ENCODE measurements at regions of chr22 and their contacts with region 1.

Region 1: GRCh38 chr22:22587577-22588188 is 28.6 kb upstream of the PRAME start:
- DNase-seq: no peak
- ATAC-seq: no peak
- H3K4me3 Mint-ChIP-seq: no peak overlapping the region
- H3K27ac Mint-ChIP-seq: no peak overlapping the region
- H3K4me1 Mint-ChIP-seq: peaks cover 42% of the 10 kb centered on the region
- H3K27me3 Mint-ChIP-seq: no peaks in the 10 kb centered on the region
- CTCF ChIP-seq: no peak

Region 2: DNA sequence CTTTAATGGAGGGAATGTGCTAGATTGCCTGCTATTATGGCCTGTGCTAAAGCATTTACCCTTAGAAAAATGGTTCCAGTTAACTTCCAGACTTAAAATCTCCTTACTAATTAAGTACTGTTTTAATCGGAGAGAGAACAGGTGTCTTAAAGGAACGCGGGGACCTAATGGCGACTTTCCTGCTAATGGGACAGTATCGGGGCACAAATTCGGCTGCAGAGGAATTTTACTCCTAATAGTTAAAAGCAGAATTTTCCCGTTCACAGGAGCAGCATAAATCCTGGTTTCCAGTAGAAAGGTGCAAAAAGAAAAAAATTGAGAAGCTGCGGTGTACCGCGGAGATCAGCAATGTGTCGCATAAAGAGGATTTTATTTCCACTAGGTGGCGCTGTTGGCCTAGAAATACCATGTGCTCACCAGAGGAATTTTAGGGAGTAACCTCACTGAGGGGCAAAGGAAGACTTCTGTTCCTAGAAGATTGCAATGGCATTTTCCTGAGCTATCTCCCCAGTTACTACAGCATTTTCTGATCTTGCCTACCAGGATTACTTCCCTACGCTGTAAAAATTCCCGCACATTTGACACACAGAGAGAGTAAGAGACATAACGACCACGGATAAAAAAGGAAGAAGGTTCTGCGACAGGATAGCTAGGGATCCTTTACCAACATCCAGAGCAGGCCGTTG is 123.7 kb before region 1 on chr22:
- CTCF ChIA-PET with region 1: interaction called, 7 read pairs
- POLR2A ChIA-PET with region 1: no interaction called
- intact Hi-C with region 1: loop called (anchors 1 kb)
- DNase-seq: no peak
- ATAC-seq: peak; percentile 61
- H3K4me3 Mint-ChIP-seq: peak overlapping the region; percentile 24
- H3K27ac Mint-ChIP-seq: peak overlapping the region; percentile 61
- H3K4me1 Mint-ChIP-seq: peaks cover 19% of the 10 kb centered on the region
- H3K27me3 Mint-ChIP-seq: peaks cover 4% of the 10 kb centered on the region
- CTCF ChIP-seq: peak; percentile 76

Region 3: GRCh38 chr22:22576244-22576988 is 11.3 kb before region 1 on chr22:
- CTCF ChIA-PET with region 1: interaction called, 31 read pairs
- POLR2A ChIA-PET with region 1: no interaction called
- intact Hi-C with region 1: no loop called
- DNase-seq: no peak
- ATAC-seq: peak; percentile 62
- H3K4me3 Mint-ChIP-seq: no peak overlapping the region
- H3K27ac Mint-ChIP-seq: no peak overlapping the region
- H3K4me1 Mint-ChIP-seq: peaks cover 12% of the 10 kb centered on the region
- H3K27me3 Mint-ChIP-seq: peaks cover 2% of the 10 kb centered on the region
- CTCF ChIP-seq: peak; percentile 20

Measured in activated B cell treated with CpG ODN at 0.5 μM for 24 hours (primary cell).